ENCODE measurements at regions of chr17 and their contacts with region 1.

Region 1: GRCh38 chr17:3738562-3739295 is 15.0 kb downstream of the HASPIN start:
- DNase-seq: peak in 1 of 3 donors; percentile 56
- ATAC-seq: peak; percentile 6 to 35 (median 24)
- H3K4me3 ChIP-seq: no peak overlapping the region
- H3K27ac ChIP-seq: no peak overlapping the region
- H3K4me1 ChIP-seq: peaks cover 0 to 3% (median 0%) of the 10 kb centered on the region in 4 donors
- H3K27me3 ChIP-seq: no peaks in the 10 kb centered on the region
- CTCF ChIP-seq: no peak
- POLR2A ChIP-seq: no peak

Region 2: GRCh38 chr17:3827124-3827773 is 88.5 kb after region 1 on chr17:
- intact Hi-C with region 1: loop called in 1 of 2 experiments (anchors 5 kb)
- DNase-seq: peak in 1 of 3 donors; percentile 69
- ATAC-seq: peak; percentile 80 to 88 (median 82)
- H3K4me3 ChIP-seq: no peak overlapping the region
- H3K27ac ChIP-seq: no peak overlapping the region
- H3K4me1 ChIP-seq: no peaks in the 10 kb centered on the region
- H3K27me3 ChIP-seq: no peaks in the 10 kb centered on the region
- CTCF ChIP-seq: peak; percentile 75 to 86 (median 82)
- POLR2A ChIP-seq: no peak

Region 3: DNA sequence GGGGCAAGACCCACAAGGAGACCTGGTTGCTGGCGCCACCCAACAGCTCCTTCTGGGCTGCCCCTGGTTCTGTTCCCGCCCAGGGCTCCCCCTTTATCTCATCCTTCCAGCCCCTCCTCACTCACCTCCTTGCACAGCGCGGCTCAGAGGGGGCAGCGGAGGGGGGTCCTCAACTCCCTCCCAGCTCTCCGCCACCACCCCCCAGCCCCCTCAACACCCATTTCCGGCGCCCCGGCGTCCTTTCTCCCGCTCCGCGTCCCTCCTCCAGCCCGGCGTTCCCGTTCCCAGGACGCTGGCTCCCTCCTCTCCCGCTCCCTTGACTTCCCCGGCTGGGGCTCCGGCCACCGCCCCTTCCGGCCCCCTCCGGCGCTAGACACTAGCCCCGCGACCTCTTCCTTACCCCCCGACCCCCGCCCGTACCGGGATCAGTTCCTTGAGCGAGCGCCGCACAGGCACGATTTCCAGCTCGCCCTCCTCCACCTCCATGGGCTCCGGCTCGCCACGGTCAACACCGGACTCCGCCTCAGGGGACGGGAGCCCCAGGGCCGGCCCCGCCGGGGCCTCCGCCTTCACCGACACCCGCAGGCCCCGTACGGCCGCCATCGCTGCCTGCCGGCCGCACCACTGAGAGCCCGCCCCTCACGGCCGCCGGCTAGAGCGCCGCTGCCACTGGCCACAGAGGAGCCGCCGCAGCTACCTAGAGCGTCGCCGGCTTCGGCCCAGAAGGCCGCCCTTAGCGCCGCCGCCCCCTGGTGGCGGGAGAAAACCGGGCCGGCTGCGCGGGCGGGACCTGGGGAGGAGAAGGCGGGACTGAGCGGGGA is 107.1 kb after region 1 on chr17 and contains the start of gene NCBP3:
- intact Hi-C with region 1: loop called in 1 of 2 experiments (anchors 10 kb)
- DNase-seq: peak; percentile 92 to 94 (median 93)
- ATAC-seq: peak; percentile 97 to 99 (median 98)
- H3K4me3 ChIP-seq: peak within 1 kb of the TSS; percentile 75 to 92 (median 91)
- H3K27ac ChIP-seq: peak within 1 kb of the TSS; percentile 59 to 79 (median 72)
- H3K4me1 ChIP-seq: peaks cover 0 to 13% (median 3%) of the 10 kb centered on the region in 4 donors
- H3K27me3 ChIP-seq: no peaks in the 10 kb centered on the region
- CTCF ChIP-seq: peak; percentile 91 to 99 (median 98)
- POLR2A ChIP-seq: peak; percentile 96
- total RNA-seq, gene NCBP3: 8.6 to 15.1 (median 10.5) TPM

Measured in right lobe of liver (tissue), 6 donors.